Body of pancreas (tissue), 4 donors: ENCODE measurements at regions of chr7 and their contacts with region 1.

Region 1: DNA sequence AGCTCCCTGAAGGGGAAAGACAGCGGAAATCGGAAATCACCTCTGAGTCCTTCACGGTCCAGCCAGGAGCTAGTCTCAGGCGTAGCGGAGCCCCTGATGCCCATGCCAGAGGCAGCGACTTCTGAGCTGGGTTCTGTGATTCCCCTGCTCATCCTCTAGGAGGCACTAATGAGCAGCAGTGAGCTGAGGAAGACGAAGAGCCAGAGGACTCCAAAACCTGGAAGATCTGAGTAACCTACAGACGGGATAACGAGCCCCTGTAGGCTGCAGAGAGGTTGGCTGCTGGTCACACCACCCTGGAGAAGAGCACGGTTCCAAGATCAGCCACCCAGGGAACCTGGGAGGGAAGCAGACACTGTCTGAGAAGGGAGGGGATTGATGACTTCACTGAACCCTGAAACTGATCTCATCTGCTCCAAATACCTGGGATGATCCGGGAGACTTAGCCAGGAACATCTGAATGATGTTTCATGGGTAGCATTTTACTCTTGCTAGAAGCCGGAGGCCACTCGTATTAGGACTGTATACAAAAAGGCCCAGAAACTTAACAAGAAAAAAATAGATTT is 304.1 kb downstream of the PAXIP1 start:
- DNase-seq: peak in 1 of 4 donors; percentile 23
- ATAC-seq: peak; percentile 71
- H3K4me3 ChIP-seq: no peak overlapping the region
- H3K27ac ChIP-seq: no peak overlapping the region
- H3K4me1 ChIP-seq: no peaks in the 10 kb centered on the region
- H3K27me3 ChIP-seq: no peaks in the 10 kb centered on the region
- CTCF ChIP-seq: peak; percentile 37 to 70 (median 63)
- POLR2A ChIP-seq: no peak

Region 2: DNA sequence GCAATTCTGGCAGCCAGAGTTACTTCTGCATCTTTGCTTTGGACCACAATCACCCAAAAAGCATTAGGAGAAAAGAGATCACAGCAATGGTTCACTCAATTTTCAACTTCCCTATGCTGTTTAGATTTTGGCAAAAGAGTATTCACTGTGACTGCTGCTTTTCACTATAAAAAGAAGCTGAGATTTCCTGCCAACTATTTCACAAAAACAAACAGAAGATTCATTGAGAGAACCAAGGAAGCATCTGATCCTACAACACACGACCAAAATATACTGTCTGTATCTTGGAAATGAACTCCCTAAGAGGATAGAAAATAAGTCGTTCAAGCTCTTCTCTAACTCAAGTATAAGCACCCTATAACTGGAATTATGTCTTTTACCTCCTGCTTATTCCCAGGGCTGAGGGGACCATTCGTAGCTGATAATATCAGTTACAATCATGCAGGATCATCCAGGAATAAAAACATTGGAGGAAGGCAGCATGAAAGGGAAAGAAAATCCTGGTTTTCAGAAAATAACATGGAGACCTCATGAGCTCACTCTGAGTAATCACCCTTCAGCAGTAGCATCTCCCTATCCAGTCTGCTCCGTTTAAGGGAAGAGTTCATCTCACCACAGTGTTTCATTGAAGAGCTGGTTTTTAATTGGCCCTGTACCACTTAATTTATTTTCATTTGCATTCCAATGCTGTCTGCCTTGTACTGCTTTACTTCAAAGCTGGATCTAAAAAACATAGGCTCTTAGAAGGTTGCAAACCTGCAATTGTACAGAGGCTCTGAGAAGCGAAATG is 48.0 kb after region 1 on chr7:
- intact Hi-C with region 1: loop called (anchors 5 kb)
- DNase-seq: no peak
- ATAC-seq: no peak
- H3K4me3 ChIP-seq: no peak overlapping the region
- H3K27ac ChIP-seq: no peak overlapping the region
- H3K4me1 ChIP-seq: no peaks in the 10 kb centered on the region
- H3K27me3 ChIP-seq: no peaks in the 10 kb centered on the region
- CTCF ChIP-seq: no peak
- POLR2A ChIP-seq: no peak